ENCODE measurements at regions of chr1 and their contacts with region 1.

Region 1: GRCh38 chr1:245156081-245156735 is 1.4 kb downstream of the KIF26B start:
- DNase-seq: peak; percentile 95
- H3K4me3 Mint-ChIP-seq: peak overlapping the region; percentile 84
- H3K27ac Mint-ChIP-seq: no peak overlapping the region
- H3K4me1 Mint-ChIP-seq: peaks cover 13% of the 10 kb centered on the region
- H3K27me3 Mint-ChIP-seq: peaks cover 65% of the 10 kb centered on the region

Region 2: GRCh38 chr1:244835276-244836134 is 320.7 kb before region 1 on chr1 and contains the start of gene COX20:
- intact Hi-C with region 1: loop called (anchors 10 kb)
- DNase-seq: peak; percentile 97
- H3K4me3 Mint-ChIP-seq: peak within 1 kb of the TSS; percentile 91
- H3K27ac Mint-ChIP-seq: peak within 1 kb of the TSS; percentile 99
- H3K4me1 Mint-ChIP-seq: peaks cover 43% of the 10 kb centered on the region
- H3K27me3 Mint-ChIP-seq: no peaks in the 10 kb centered on the region
- total RNA-seq, gene COX20: 28.6 and 30.0 TPM in 2 replicates

Region 3: GRCh38 chr1:245180496-245181157 is 24.4 kb after region 1 on chr1:
- intact Hi-C with region 1: no loop called
- DNase-seq: no peak
- H3K4me3 Mint-ChIP-seq: no peak overlapping the region
- H3K27ac Mint-ChIP-seq: no peak overlapping the region
- H3K4me1 Mint-ChIP-seq: no peaks in the 10 kb centered on the region
- H3K27me3 Mint-ChIP-seq: no peaks in the 10 kb centered on the region

Region 4: GRCh38 chr1:246002725-246003441 is 846.7 kb after region 1 on chr1:
- intact Hi-C with region 1: loop called (anchors 1 kb)
- DNase-seq: peak; percentile 93
- H3K4me3 Mint-ChIP-seq: no peak overlapping the region
- H3K27ac Mint-ChIP-seq: no peak overlapping the region
- H3K4me1 Mint-ChIP-seq: no peaks in the 10 kb centered on the region
- H3K27me3 Mint-ChIP-seq: no peaks in the 10 kb centered on the region

Region 5: DNA sequence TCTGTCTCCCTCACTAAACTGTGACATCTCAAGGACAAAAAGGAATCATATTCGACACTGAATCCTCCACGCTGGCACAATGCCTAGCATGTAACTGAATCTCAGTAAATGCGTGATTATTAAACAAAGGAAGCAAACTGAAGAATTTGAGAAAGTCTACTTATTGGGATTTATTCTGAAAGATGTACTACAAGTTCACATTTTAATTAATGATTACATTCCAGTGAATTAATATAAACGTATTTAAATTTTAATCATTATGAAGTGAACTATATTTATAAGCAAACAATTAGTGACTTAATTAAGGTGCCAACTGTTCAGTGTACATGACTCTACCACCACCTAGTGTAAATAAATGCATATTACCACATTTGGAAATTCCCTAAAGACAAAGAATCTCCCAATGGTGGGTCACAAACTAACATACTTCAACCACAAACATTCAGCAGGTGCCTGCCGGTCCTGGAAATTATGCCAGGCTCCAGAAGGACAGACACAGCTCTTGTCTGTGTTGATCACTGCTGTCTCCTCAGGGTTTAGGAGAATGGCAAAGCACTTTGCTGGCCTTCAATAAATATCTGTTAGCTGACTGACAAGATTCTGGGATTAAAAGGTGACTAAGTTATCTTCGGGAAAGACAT is 1294.5 kb after region 1 on chr1:
- intact Hi-C with region 1: loop called (anchors 1 kb)
- DNase-seq: no peak
- H3K4me3 Mint-ChIP-seq: no peak overlapping the region
- H3K27ac Mint-ChIP-seq: no peak overlapping the region
- H3K4me1 Mint-ChIP-seq: no peaks in the 10 kb centered on the region
- H3K27me3 Mint-ChIP-seq: no peaks in the 10 kb centered on the region

Region 6: DNA sequence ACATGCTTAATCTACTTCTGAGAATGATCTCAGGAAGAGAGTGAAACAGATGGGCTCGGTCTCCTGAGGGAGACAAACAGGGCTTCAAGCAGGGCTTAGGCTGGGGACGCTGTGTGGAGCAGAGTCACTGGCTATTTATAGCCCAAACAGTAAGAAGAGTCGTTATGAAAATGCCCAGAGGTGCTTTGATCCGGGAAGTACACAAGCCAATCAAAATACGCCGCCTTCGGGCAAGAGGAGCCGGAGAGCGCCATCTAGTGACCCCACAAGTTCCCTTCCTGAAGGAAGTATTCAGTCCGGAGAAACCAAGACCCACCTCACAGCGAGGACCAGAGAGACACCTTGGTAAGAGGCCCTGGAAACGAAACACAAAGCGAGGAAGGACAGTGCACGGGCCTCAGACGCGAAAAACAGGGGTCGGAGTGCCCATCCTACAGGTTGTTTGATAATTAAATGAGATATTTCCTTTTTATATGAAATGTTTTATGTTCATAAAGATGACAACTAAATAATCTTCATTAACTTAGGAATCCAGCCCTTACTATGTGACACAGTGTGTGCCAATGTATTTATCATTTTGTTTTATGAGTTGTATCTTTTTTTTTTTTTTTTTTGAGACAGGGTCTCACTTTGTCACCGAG is 1543.0 kb after region 1 on chr1:
- intact Hi-C with region 1: loop called (anchors 10 kb)
- DNase-seq: peak; percentile 93
- H3K4me3 Mint-ChIP-seq: peak overlapping the region; percentile 22
- H3K27ac Mint-ChIP-seq: peak overlapping the region; percentile 32
- H3K4me1 Mint-ChIP-seq: peaks cover 8% of the 10 kb centered on the region
- H3K27me3 Mint-ChIP-seq: no peaks in the 10 kb centered on the region

Measured in activated CD4-positive, alpha-beta T cell treated with anti-CD3 and anti-CD28 coated beads, Interleukin-2, amount 10 ng/mL, durations not matched to agents 24 days and 14 days (primary cell).